H1 (cell line): ENCODE measurements at regions of chr9 and their contacts with region 1.

Region 1: DNA sequence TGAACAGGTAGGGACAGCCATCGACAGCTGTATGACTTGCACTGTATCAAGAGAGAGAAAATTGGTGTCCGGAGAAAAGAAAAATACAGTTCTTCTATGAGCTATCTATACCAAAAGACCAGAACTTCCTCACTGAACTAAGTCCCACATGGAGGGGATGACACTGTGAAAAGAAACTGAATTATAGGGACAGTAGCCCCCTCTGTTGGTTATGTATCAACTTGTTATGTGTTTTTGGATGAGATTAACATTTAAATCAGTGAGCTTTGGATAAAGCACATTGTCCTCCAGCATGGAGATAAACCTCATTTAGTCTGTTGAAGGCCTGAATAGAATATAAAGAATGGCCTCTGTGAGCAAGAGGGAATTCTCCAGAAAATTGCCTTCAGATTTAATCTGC is 176.6 kb upstream of the SH3GL2 start:
- DNase-seq: no peak
- H3K4me3 ChIP-seq: no peak overlapping the region
- H3K27ac ChIP-seq: no peak overlapping the region
- H3K4me1 ChIP-seq: peaks cover 0 to 9% (median 3%) of the 10 kb centered on the region in 4 experiments; a peak in 4 of 7 replicates
- H3K27me3 ChIP-seq: no peaks in the 10 kb centered on the region
- CTCF ChIP-seq: peak in 2 of 3 experiments; percentile 36 to 55; a peak in 2 of 4 replicates
- EP300 ChIP-seq: no peak
- POLR2A ChIP-seq: no peak
- RAD21 ChIP-seq: peak; percentile 78 to 80

Region 2: GRCh38 chr9:17414986-17415385 is 12.7 kb after region 1 on chr9:
- CTCF ChIA-PET with region 1: interaction called, 28 read pairs
- POLR2A ChIA-PET with region 1: no interaction called
- DNase-seq: no peak
- H3K4me3 ChIP-seq: no peak overlapping the region
- H3K27ac ChIP-seq: no peak overlapping the region
- H3K4me1 ChIP-seq: no peaks in the 10 kb centered on the region
- H3K27me3 ChIP-seq: no peaks in the 10 kb centered on the region
- CTCF ChIP-seq: no peak
- EP300 ChIP-seq: no peak
- POLR2A ChIP-seq: no peak
- RAD21 ChIP-seq: no peak

Region 3: GRCh38 chr9:17436854-17437253 is 34.5 kb after region 1 on chr9:
- CTCF ChIA-PET with region 1: no interaction called
- POLR2A ChIA-PET with region 1: no interaction called
- DNase-seq: no peak
- H3K4me3 ChIP-seq: no peak overlapping the region
- H3K27ac ChIP-seq: no peak overlapping the region
- H3K4me1 ChIP-seq: no peaks in the 10 kb centered on the region
- H3K27me3 ChIP-seq: no peaks in the 10 kb centered on the region
- CTCF ChIP-seq: no peak
- EP300 ChIP-seq: no peak
- POLR2A ChIP-seq: no peak
- RAD21 ChIP-seq: no peak